Mammary epithelial cell (primary cell): ENCODE measurements at regions of chr3 and their contacts with region 1.

Region 1: GRCh38 chr3:48268381-48269183 is 27.7 kb downstream of the ZNF589 start:
- DNase-seq: peak; percentile 99
- H3K4me3 ChIP-seq: peak overlapping the region; percentile 2 to 7 (median 7)
- H3K27ac ChIP-seq: peak overlapping the region; percentile 98
- H3K4me1 ChIP-seq: peaks cover 34% of the 10 kb centered on the region
- H3K27me3 ChIP-seq: no peaks in the 10 kb centered on the region
- CTCF ChIP-seq: no peak

Region 2: DNA sequence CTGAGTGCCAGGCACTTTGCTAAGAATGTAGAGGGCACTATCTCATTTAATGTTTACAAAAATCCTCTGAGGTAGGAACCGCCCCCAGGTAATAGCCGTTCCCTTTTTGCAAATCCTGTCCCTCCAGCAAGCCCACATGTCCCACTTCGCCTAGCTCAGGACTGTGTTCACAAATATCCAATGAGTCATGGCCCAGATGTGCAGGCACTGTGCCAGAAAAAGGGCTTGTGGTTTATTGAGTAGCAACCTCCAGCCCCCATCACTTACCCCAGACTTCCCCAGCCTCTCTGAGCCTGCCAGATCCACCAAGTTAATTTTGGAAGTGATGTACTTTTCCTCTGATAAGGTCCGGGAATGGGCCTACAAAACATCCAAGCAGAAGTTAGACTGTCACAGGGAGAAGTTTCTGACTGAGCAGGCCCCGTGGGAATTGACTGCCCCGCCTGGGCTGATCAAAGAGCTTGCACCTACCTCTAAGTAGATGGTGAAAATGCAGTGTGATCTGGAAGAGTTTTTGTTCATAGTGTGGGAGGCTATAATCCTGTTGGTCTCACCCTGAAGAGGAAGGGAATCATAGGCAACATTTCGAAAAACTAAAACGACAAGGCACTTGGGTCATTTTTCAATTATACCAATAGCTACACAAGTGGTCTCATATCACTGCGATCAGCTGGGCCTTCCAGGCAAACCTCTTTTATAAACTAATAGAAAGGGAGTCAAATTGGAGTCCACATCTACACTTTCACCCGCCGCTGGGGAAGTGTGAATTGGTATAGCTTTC is 1001.7 kb before region 1 on chr3:
- CTCF ChIA-PET with region 1: no interaction called
- dilution Hi-C with region 1: no loop called
- in situ Hi-C with region 1: no loop called
- intact Hi-C with region 1: no loop called
- DNase-seq: peak; percentile 93
- H3K4me3 ChIP-seq: no peak overlapping the region
- H3K27ac ChIP-seq: no peak overlapping the region
- H3K4me1 ChIP-seq: peaks cover 12% of the 10 kb centered on the region
- H3K27me3 ChIP-seq: no peaks in the 10 kb centered on the region
- CTCF ChIP-seq: no peak

Region 3: DNA sequence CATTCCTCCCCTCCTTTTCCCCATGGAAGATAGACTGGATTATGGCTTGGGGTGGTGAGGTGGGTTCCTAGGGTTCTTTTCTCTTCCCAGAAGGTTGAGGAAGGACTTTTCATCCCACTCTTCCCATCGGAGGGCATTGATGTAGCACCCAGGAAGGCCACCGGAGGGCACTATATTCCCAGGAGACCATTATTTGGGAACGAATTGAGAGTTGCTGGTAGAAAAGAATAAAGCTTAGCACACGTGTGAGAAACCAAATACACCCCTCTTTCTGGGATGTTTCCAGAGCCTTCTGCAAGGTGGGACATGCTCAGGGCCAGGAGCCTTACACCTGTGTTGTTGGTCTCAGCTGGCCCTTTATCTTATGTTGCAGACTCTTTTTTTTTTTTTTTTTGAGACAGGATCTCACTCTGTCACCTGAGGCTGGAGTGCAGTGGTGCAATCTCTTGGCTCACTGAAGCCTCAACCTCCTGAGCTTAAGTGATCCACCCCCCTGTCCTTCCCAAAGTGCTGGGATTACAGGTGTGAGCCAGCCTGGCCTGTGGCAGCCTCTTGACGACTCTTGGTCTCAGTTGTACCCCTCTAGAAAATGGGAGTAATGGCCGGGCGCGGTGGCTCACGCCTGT is 74.0 kb before region 1 on chr3:
- CTCF ChIA-PET with region 1: interaction called, 10 read pairs
- dilution Hi-C with region 1: loop called (anchors 5 kb)
- in situ Hi-C with region 1: no loop called
- intact Hi-C with region 1: loop called (anchors 1 kb)
- DNase-seq: peak; percentile 63
- H3K4me3 ChIP-seq: no peak overlapping the region
- H3K27ac ChIP-seq: no peak overlapping the region
- H3K4me1 ChIP-seq: peaks cover 2% of the 10 kb centered on the region
- H3K27me3 ChIP-seq: no peaks in the 10 kb centered on the region
- CTCF ChIP-seq: peak; percentile 88 to 97

Region 4: GRCh38 chr3:48240711-48241491 is 27.7 kb before region 1 on chr3 and contains the start of gene ZNF589:
- CTCF ChIA-PET with region 1: no interaction called
- dilution Hi-C with region 1: no loop called
- in situ Hi-C with region 1: no loop called
- intact Hi-C with region 1: loop called (anchors 2 kb)
- DNase-seq: peak; percentile 94
- H3K4me3 ChIP-seq: peak within 1 kb of the TSS; percentile 92 to 98 (median 98)
- H3K27ac ChIP-seq: peak within 1 kb of the TSS; percentile 67
- H3K4me1 ChIP-seq: peaks cover 5% of the 10 kb centered on the region
- H3K27me3 ChIP-seq: no peaks in the 10 kb centered on the region
- CTCF ChIP-seq: peak in 1 of 2 donors; percentile 48
- total RNA-seq, gene ZNF589: 8.8 to 9.2 TPM

Region 5: GRCh38 chr3:48364840-48365239 is 96.3 kb after region 1 on chr3:
- CTCF ChIA-PET with region 1: no interaction called
- dilution Hi-C with region 1: loop called (anchors 5 kb)
- in situ Hi-C with region 1: no loop called
- intact Hi-C with region 1: no loop called
- DNase-seq: no peak
- H3K4me3 ChIP-seq: no peak overlapping the region
- H3K27ac ChIP-seq: no peak overlapping the region
- H3K4me1 ChIP-seq: no peaks in the 10 kb centered on the region
- H3K27me3 ChIP-seq: no peaks in the 10 kb centered on the region
- CTCF ChIP-seq: no peak

Region 6: GRCh38 chr3:48465531-48466378 is 197.2 kb after region 1 on chr3:
- CTCF ChIA-PET with region 1: no interaction called
- dilution Hi-C with region 1: no loop called
- in situ Hi-C with region 1: no loop called
- intact Hi-C with region 1: loop called (anchors 1 kb)
- DNase-seq: peak; percentile 100
- H3K4me3 ChIP-seq: peak overlapping the region; percentile 26 to 55 (median 50)
- H3K27ac ChIP-seq: peak overlapping the region; percentile 99
- H3K4me1 ChIP-seq: peaks cover 33% of the 10 kb centered on the region
- H3K27me3 ChIP-seq: no peaks in the 10 kb centered on the region
- CTCF ChIP-seq: peak; percentile 45 to 81